ENCODE measurements at regions of chr3 and their contacts with region 1.

Region 1: GRCh38 chr3:32177702-32178198 is 60.7 kb upstream of the CMTM8 start:
- DNase-seq: peak; percentile 69
- H3K4me3 ChIP-seq: no peak overlapping the region
- H3K27ac ChIP-seq: no peak overlapping the region
- H3K4me1 ChIP-seq: peaks cover 6% of the 10 kb centered on the region
- CTCF ChIP-seq: peak; percentile 68

Region 2: DNA sequence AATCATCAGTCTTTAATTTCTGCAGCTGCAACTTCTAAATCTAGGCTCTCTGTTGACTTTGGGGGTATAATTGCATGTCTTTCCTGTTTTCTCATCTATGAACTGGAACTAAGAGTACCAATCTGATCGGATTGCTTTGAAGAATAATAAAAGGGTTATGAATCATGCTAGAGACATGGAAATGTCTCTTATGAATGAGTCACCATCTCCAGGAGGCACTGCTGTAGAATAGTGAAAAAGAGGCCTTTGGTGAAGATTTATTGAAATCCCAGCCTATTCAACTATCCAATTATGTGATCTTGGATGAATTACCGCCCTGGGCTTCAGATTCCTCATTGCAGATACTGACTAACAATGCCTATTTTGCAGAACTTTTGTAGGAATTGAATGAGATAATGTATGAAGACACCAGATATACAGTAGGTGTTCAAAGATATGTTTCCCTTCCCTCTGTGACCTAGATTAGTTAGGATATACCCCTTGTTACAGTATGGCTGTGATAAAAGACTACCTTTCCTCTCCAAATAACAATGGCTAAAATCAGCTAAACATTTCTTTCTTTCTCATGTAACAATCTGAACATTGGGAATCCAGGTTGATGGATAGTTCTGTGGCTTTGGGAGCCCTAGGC is 49.2 kb after region 1 on chr3:
- CTCF ChIA-PET with region 1: no interaction called
- POLR2A ChIA-PET with region 1: no interaction called
- intact Hi-C with region 1: no loop called
- DNase-seq: no peak
- H3K4me3 ChIP-seq: no peak overlapping the region
- H3K27ac ChIP-seq: no peak overlapping the region
- H3K4me1 ChIP-seq: no peaks in the 10 kb centered on the region
- CTCF ChIP-seq: no peak

Region 3: GRCh38 chr3:32240159-32240545 is 62.4 kb after region 1 on chr3:
- CTCF ChIA-PET with region 1: interaction called, 4 read pairs
- POLR2A ChIA-PET with region 1: no interaction called
- intact Hi-C with region 1: loop called (anchors 2 kb)
- DNase-seq: peak; percentile 67
- H3K4me3 ChIP-seq: peak overlapping the region; percentile 74
- H3K27ac ChIP-seq: no peak overlapping the region
- H3K4me1 ChIP-seq: peaks cover 11% of the 10 kb centered on the region
- CTCF ChIP-seq: peak; percentile 80

Region 4: GRCh38 chr3:32340039-32340438 is 162.3 kb after region 1 on chr3:
- CTCF ChIA-PET with region 1: no interaction called
- POLR2A ChIA-PET with region 1: no interaction called
- intact Hi-C with region 1: loop called (anchors 1 kb)
- DNase-seq: peak; percentile 64
- H3K4me3 ChIP-seq: no peak overlapping the region
- H3K27ac ChIP-seq: no peak overlapping the region
- H3K4me1 ChIP-seq: no peaks in the 10 kb centered on the region
- CTCF ChIP-seq: peak; percentile 77

Measured in OCI-LY7 (cell line).